Breast epithelium (tissue), 4 donors: ENCODE measurements at regions of chr5 and their contacts with region 1.

Region 1: GRCh38 chr5:76337953-76338451 is 65.1 kb upstream of the IQGAP2 start:
- DNase-seq: peak; percentile 36 to 56
- H3K4me3 ChIP-seq: no peak overlapping the region
- H3K27ac ChIP-seq: no peak overlapping the region
- H3K4me1 ChIP-seq: no peaks in the 10 kb centered on the region
- H3K27me3 ChIP-seq: no peaks in the 10 kb centered on the region
- CTCF ChIP-seq: peak; percentile 30 to 70 (median 54)
- POLR2A ChIP-seq: no peak

Region 2: GRCh38 chr5:76351577-76351976 is 13.6 kb after region 1 on chr5:
- intact Hi-C with region 1: loop called (anchors 2 kb)
- DNase-seq: no peak
- H3K4me3 ChIP-seq: no peak overlapping the region
- H3K27ac ChIP-seq: no peak overlapping the region
- H3K4me1 ChIP-seq: no peaks in the 10 kb centered on the region
- H3K27me3 ChIP-seq: no peaks in the 10 kb centered on the region
- CTCF ChIP-seq: no peak
- POLR2A ChIP-seq: no peak

Region 3: GRCh38 chr5:76393035-76393680 is 55.2 kb after region 1 on chr5:
- intact Hi-C with region 1: no loop called
- DNase-seq: no peak
- H3K4me3 ChIP-seq: no peak overlapping the region
- H3K27ac ChIP-seq: no peak overlapping the region
- H3K4me1 ChIP-seq: no peaks in the 10 kb centered on the region
- H3K27me3 ChIP-seq: no peaks in the 10 kb centered on the region
- CTCF ChIP-seq: no peak
- POLR2A ChIP-seq: no peak